Activated T-helper 1 cell treated with anti-CD3 and anti-CD28 coated beads, Interleukin-12 subunit alpha, Interleukin-12 subunit beta, Interleukin-2, Interleukin-4 antibody, amounts not matched to agents 30 ng/mL and 10 ng/mL and 1 ng/mL, durations not matched to agents 14 hours and 24 hours and 36 hours (primary cell): ENCODE measurements at regions of chr12 and their contacts with region 1.

Region 1: GRCh38 chr12:54404061-54405004 is 14.7 kb downstream of the ITGA5 start:
- DNase-seq: peak; percentile 37
- H3K4me3 Mint-ChIP-seq: no peak overlapping the region
- H3K27ac Mint-ChIP-seq: no peak overlapping the region
- H3K4me1 Mint-ChIP-seq: peaks cover 10% of the 10 kb centered on the region
- H3K27me3 Mint-ChIP-seq: no peaks in the 10 kb centered on the region

Region 2: GRCh38 chr12:54419088-54419892 is 15.0 kb after region 1 on chr12 and contains the start of gene ITGA5:
- intact Hi-C with region 1: loop called (anchors 1 kb)
- DNase-seq: no peak
- H3K4me3 Mint-ChIP-seq: peak within 1 kb of the TSS; percentile 80
- H3K27ac Mint-ChIP-seq: peak within 1 kb of the TSS; percentile 86
- H3K4me1 Mint-ChIP-seq: peaks cover 52% of the 10 kb centered on the region
- H3K27me3 Mint-ChIP-seq: peaks cover 16% of the 10 kb centered on the region
- total RNA-seq, gene ITGA5: 31.2 and 31.6 TPM in 2 replicates

Region 3: DNA sequence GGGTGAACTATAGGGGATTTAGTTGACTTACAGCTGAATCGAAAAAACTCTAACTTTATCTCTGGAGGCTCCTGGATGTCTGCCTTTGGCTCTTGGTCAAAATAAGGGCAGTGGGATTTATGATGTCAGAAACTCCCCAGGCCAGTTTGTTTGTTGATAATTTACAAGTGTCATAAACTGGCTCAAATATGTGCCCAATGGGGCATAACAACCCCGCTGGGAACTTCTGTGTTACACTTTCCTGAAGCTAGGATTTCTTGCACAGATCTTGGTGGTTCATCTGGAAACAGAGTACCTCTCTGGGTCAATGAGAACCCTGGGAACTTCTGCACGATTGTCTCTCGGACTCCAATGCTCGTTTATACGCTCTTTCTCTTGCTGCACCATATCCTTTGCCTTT is 391.3 kb after region 1 on chr12:
- intact Hi-C with region 1: no loop called
- DNase-seq: no peak
- H3K4me3 Mint-ChIP-seq: no peak overlapping the region
- H3K27ac Mint-ChIP-seq: no peak overlapping the region
- H3K4me1 Mint-ChIP-seq: no peaks in the 10 kb centered on the region
- H3K27me3 Mint-ChIP-seq: peaks cover 7% of the 10 kb centered on the region

Region 4: DNA sequence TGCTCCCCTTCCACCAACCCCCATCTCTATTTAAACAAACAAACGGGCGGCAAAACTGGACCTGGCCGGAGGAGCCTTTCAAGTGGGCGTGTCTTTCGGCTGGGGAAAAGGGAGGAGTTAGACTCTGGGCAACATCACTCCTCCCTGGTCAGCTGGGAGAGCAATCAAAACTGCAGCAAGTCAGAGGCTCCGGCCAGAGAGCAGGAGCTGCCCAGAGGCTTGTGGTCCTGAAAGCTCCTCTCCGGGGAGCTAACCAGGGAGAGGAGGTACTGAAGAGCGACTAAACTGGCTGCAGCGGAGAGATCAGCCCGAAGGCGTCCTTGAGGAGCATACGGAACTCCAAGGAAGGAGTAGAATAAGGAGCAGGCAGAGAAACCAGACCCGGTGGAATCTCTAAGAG is 615.4 kb after region 1 on chr12 and contains the start of gene NEUROD4:
- intact Hi-C with region 1: no loop called
- DNase-seq: no peak
- H3K4me3 Mint-ChIP-seq: no peak within 1 kb of the TSS
- H3K27ac Mint-ChIP-seq: no peak within 1 kb of the TSS
- H3K4me1 Mint-ChIP-seq: no peaks in the 10 kb centered on the region
- H3K27me3 Mint-ChIP-seq: peaks cover 45% of the 10 kb centered on the region
- total RNA-seq, gene NEUROD4: 0.05 TPM in 1 of 2 replicates, not detected in the other

Region 5: GRCh38 chr12:55172686-55173085 is 768.4 kb after region 1 on chr12:
- intact Hi-C with region 1: no loop called
- DNase-seq: no peak
- H3K4me3 Mint-ChIP-seq: no peak overlapping the region
- H3K27ac Mint-ChIP-seq: no peak overlapping the region
- H3K4me1 Mint-ChIP-seq: no peaks in the 10 kb centered on the region
- H3K27me3 Mint-ChIP-seq: no peaks in the 10 kb centered on the region